ENCODE measurements at regions of chr14 and their contacts with region 1.

Region 1: DNA sequence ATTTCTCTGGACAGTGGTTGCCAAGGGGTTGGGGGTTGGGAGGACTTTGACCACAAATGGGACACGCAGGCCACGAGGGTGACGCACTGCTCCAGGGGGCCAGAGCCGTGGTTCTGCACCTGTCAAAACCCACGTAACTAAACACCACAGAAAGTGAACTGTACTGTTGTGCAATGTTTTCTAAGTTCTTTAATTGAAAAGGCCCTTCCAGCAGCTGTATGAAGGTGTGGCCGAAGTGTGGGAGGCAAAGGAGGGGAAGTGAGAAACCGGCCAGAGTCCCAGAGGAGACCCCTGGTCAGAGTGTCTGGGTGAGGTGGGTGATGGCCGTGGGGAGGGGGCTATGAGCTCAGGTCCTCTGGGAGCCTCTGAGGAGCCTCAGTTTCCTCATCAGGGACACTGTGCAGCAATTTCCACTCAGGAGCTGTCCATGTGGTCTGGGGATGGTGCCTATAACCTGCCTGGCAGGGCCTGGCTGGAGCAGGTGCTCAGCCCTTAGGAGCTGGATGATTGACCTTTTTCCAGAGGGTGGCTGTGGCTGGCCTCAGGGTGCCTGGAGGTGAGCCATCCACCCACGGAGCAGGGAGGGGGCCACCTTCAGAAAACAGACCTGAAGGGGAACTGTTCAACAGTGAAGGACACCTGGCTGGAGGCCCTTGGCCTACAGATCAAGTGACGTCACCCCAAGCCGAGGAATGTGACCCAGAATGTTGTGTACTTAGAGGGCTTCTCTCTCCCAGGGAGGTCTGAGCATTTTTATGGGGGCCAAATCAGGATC is 9.8 kb upstream of the BDKRB2 start:
- DNase-seq: no peak
- H3K4me3 ChIP-seq: no peak overlapping the region
- H3K27ac ChIP-seq: no peak overlapping the region
- H3K4me1 ChIP-seq: peaks cover 0 to 10% (median 1%) of the 10 kb centered on the region in 4 donors
- H3K27me3 ChIP-seq: no peaks in the 10 kb centered on the region
- CTCF ChIP-seq: no peak
- EP300 ChIP-seq: no peak
- POLR2A ChIP-seq: no peak

Region 2: GRCh38 chr14:96117100-96117897 is 77.5 kb before region 1 on chr14:
- in situ Hi-C with region 1: loop called in 1 of 4 experiments (anchors 5 kb)
- intact Hi-C with region 1: no loop called
- DNase-seq: no peak
- H3K4me3 ChIP-seq: no peak overlapping the region
- H3K27ac ChIP-seq: no peak overlapping the region
- H3K4me1 ChIP-seq: peaks cover 0 to 6% (median 0%) of the 10 kb centered on the region in 4 donors
- H3K27me3 ChIP-seq: no peaks in the 10 kb centered on the region
- CTCF ChIP-seq: no peak
- EP300 ChIP-seq: no peak
- POLR2A ChIP-seq: no peak

Region 3: DNA sequence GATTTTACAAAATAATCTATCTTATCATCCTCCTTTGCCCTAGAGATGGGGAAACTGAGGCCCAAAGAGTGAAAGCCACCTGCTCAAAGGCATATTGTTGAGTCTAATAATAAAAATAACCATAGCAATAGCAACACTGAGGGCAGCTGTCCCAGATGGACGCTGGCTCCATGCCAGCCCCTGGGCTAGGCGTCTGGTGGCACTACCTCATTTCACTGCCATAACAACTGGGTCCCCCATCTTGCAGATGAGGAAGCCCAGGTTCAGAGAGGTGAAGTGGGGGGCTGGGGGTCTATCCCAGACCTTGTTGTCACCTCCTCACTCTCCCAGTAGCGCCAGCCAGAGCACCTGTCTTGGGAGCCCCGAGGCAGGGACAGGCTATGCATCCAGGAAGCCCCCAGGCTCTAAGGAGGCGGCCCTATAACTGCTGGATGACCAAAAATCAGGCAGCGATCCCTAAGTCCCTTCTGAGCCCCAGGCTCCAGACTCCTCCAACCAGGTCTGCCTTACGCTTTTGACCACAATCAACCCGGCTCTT is 22.6 kb after region 1 on chr14:
- in situ Hi-C with region 1: no loop called
- intact Hi-C with region 1: loop called (anchors 1 kb)
- DNase-seq: no peak
- H3K4me3 ChIP-seq: no peak overlapping the region
- H3K27ac ChIP-seq: no peak overlapping the region
- H3K4me1 ChIP-seq: peaks cover 0 to 12% (median 3%) of the 10 kb centered on the region in 4 donors
- H3K27me3 ChIP-seq: no peaks in the 10 kb centered on the region
- CTCF ChIP-seq: no peak
- EP300 ChIP-seq: no peak
- POLR2A ChIP-seq: no peak